Sigmoid colon (tissue), 7 donors: ENCODE measurements at regions of chr16 and their contacts with region 1.

Region 1: GRCh38 chr16:18801197-18801972 is at the start of gene ARL6IP1:
- DNase-seq: peak; percentile 100
- H3K4me3 ChIP-seq: peak within 1 kb of the TSS; percentile 61 to 95 (median 90)
- H3K27ac ChIP-seq: peak within 1 kb of the TSS; percentile 90 to 95 (median 93)
- H3K4me1 ChIP-seq: peaks cover 0 to 42% (median 30%) of the 10 kb centered on the region in 4 donors
- H3K27me3 ChIP-seq: no peaks in the 10 kb centered on the region
- CTCF ChIP-seq: peak; percentile 87 to 96 (median 90)
- EP300 ChIP-seq: no peak
- POLR2A ChIP-seq: peak; percentile 96 to 98
- total RNA-seq, gene ARL6IP1: 77.5 to 128 (median 114) TPM

Region 2: DNA sequence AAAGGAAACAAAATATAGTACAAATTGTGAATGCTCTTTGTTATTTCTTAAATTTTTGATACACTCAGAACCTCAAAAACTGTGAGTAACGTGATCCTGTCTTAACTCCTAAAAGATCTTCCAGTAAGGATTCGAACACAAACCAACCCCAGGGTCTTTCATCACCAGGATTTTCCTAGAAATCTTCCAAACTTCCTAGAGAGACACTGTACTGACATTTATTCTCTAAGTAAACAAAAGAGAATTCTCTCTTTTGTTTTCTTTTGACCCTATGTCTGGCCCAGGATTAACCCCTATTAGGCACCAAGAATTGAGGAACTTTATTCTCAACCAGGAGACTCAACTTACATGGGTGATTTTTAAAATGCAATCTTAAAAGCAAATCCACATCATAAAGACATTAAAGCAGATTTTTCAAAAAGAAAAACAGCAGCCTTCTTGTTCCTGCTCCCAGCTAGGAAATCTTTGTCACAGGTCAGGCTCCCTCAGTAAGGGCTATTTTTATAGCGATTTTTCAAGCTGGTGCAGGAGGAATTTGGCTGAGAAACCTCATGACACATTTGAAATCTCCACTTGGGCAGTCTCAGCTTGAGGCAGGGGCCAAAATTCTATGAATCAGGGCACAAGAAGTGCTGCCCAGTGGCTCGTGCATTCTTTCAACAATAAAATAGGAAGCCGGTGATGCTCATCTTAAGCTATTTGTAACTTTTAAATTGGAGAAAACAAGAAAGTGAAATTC is 131.0 kb after region 1 on chr16:
- intact Hi-C with region 1: loop called (anchors 5 kb)
- DNase-seq: no peak
- H3K4me3 ChIP-seq: no peak overlapping the region
- H3K27ac ChIP-seq: peak overlapping the region in 2 of 4 donors; percentile 41 to 76
- H3K4me1 ChIP-seq: peaks cover 0 to 10% (median 0%) of the 10 kb centered on the region in 4 donors
- H3K27me3 ChIP-seq: no peaks in the 10 kb centered on the region
- CTCF ChIP-seq: no peak
- EP300 ChIP-seq: no peak
- POLR2A ChIP-seq: no peak

Region 3: GRCh38 chr16:18969050-18969854 is 167.9 kb after region 1 on chr16:
- intact Hi-C with region 1: loop called (anchors 2 kb)
- DNase-seq: peak; percentile 89
- H3K4me3 ChIP-seq: peak overlapping the region in 3 of 4 donors; percentile 26 to 36 (median 36)
- H3K27ac ChIP-seq: no peak overlapping the region
- H3K4me1 ChIP-seq: peaks cover 0 to 4% (median 0%) of the 10 kb centered on the region in 4 donors
- H3K27me3 ChIP-seq: no peaks in the 10 kb centered on the region
- CTCF ChIP-seq: peak; percentile 38 to 87 (median 83)
- EP300 ChIP-seq: no peak
- POLR2A ChIP-seq: no peak